ENCODE measurements at regions of chr17 and their contacts with region 1.

Region 1: DNA sequence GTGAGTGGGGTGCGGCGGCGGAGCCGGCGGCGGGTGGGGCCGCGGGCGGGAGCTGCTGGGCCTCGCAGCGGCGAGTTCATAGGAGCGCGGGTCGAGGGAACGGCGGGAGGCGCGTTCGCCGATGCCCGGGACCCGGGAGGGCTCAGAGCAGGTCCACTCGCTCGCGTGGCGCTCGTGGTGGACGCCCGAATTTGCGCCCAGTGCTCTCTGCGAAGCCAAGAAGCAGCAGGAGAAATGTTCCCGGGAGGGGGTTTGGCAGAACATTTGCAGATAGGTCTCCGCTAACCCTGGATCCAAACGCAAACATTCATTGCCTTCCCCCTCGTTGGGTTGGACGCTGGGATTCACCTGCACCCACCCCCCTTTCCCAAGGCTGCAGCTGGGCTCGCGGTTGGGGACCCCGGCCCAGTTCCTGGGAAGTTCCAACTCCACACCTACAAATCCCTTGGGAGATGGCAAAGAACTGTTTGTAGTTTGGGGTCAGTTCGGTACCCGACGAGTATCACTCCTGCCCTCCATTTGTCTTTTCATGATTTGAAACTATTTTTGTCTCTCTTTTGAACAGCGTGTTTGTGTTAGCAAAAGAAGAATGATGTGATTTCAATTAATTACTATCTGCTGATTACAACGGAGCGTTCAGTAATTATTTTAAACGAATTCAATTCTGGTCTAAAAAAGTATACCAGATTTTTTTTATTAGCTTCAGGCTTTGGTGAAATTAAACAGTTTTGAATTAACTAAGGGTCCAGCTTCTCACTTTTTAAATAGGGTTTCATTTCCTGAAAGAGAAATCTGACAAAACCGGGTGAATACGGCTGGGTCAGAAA is 2.3 kb downstream of the NTN1 start:
- DNase-seq: no peak
- H3K4me3 Mint-ChIP-seq: no peak overlapping the region
- H3K27ac Mint-ChIP-seq: no peak overlapping the region
- H3K4me1 Mint-ChIP-seq: peaks cover 4% of the 10 kb centered on the region
- H3K27me3 Mint-ChIP-seq: peaks cover 61% of the 10 kb centered on the region

Region 2: DNA sequence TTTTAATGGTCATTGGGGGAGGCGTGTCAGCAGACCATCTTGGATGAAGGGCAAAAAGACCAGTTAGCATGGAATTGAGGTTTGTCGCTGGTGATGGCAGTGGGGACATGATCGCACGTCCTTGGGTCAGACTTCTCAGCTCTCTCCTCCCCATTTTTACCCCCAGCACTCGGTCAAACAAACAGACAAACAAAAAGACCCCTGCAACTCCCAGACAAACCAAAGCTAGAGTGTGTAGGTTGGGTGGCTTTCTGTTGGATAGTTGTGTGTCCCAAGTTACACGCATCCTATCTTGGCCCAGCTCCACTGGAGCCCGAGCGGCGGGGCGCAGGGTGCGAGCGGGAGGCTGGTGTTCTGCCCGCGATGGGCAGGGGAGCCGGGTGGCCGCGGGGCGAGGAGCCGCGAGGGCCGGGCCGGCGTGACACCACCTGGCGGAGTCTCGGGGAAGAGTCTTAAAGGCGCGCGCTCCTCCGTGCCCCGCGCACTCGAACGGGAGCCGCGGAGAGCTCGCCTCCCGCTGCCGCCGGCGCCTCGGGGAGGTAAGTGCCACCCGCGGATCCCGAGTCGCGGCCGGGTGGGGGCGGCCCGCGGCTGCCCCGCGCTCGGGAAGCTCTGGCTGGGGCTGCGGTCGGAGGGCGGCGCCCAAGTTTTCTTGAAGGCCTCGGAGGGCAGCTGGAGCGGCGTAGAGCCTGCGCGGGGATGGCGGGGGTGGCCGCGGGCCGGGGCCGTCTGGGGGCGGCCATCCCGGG is 20.8 kb before region 1 on chr17:
- intact Hi-C with region 1: loop called (anchors 2 kb)
- DNase-seq: no peak
- H3K4me3 Mint-ChIP-seq: peak overlapping the region; percentile 47
- H3K27ac Mint-ChIP-seq: no peak overlapping the region
- H3K4me1 Mint-ChIP-seq: peaks cover 6% of the 10 kb centered on the region
- H3K27me3 Mint-ChIP-seq: peaks cover 68% of the 10 kb centered on the region